ENCODE measurements at regions of chr3 and their contacts with region 1.

Region 1: DNA sequence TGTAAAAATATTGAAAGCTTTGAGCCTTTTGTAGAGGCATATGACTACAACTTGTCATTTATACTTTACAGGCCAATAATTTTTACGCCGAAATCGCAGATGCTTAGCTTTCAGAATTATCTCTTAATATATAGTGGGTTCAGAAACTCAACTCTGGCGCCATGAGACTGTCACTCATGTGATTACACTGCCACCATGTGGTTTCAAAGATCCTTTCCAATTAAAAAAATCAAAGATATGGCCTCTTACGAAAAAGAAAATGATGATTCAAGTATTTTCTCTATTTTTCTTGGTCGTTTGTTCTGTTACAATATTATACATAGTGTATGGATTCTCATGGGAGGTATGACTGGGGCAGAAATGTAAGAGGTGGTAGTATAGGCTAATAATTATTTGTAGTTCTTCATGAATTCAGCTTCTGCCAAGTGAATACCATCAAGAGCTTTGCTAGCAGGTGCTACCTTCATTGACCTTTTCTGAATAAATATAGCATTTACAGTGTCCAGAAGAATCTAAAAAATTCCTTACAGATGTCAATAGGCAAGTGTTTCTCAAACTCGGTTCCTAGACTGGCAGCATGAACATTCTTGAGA is 751.7 kb upstream of the GOLIM4 start:
- DNase-seq: no peak
- H3K4me3 ChIP-seq: no peak overlapping the region
- H3K27ac ChIP-seq: no peak overlapping the region
- H3K4me1 ChIP-seq: no peaks in the 10 kb centered on the region
- H3K27me3 ChIP-seq: peaks cover 0 to 4% (median 0%) of the 10 kb centered on the region in 3 donors
- CTCF ChIP-seq: peak; percentile 28 to 53 (median 44)
- EP300 ChIP-seq: no peak
- POLR2A ChIP-seq: no peak

Region 2: GRCh38 chr3:168213920-168214319 is 633.5 kb before region 1 on chr3:
- intact Hi-C with region 1: loop called (anchors 2 kb)
- DNase-seq: no peak
- H3K4me3 ChIP-seq: no peak overlapping the region
- H3K27ac ChIP-seq: no peak overlapping the region
- H3K4me1 ChIP-seq: no peaks in the 10 kb centered on the region
- H3K27me3 ChIP-seq: no peaks in the 10 kb centered on the region
- CTCF ChIP-seq: no peak
- EP300 ChIP-seq: no peak
- POLR2A ChIP-seq: no peak

Region 3: DNA sequence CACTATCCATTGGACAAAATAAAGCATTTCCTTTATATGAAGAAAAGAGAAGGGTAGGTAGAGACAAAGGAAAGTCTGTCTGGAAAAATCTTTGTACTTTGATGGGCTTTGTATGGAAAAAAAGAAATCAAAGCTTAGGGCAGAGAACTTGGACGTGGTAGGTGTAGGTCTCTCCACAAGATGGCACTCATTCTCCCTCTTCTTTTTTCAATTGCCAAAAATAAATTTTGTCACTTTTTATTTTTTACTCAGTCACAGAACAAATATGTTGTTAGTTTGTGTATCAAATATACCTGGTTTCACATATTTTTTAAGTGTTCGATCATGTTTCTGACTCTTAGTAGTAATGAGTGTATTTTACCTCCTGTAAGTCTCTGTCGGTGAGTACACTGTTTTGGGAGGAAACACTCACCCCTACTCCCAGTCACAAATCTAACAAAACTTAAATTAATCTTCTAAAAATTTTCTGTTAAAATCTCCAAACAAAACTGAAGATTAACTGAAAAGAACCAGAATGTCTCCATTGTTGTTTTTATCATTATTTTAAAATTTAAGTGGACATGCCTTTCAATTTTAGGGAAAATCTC is 335.9 kb before region 1 on chr3:
- intact Hi-C with region 1: loop called (anchors 5 kb)
- DNase-seq: no peak
- H3K4me3 ChIP-seq: no peak overlapping the region
- H3K27ac ChIP-seq: no peak overlapping the region
- H3K4me1 ChIP-seq: no peaks in the 10 kb centered on the region
- H3K27me3 ChIP-seq: no peaks in the 10 kb centered on the region
- CTCF ChIP-seq: peak in 2 of 4 experiments; percentile 6 to 29
- EP300 ChIP-seq: no peak
- POLR2A ChIP-seq: no peak

Region 4: GRCh38 chr3:168671082-168671481 is 176.3 kb before region 1 on chr3:
- intact Hi-C with region 1: no loop called
- DNase-seq: no peak
- H3K4me3 ChIP-seq: no peak overlapping the region
- H3K27ac ChIP-seq: no peak overlapping the region
- H3K4me1 ChIP-seq: no peaks in the 10 kb centered on the region
- H3K27me3 ChIP-seq: no peaks in the 10 kb centered on the region
- CTCF ChIP-seq: no peak
- EP300 ChIP-seq: no peak
- POLR2A ChIP-seq: no peak

Region 5: DNA sequence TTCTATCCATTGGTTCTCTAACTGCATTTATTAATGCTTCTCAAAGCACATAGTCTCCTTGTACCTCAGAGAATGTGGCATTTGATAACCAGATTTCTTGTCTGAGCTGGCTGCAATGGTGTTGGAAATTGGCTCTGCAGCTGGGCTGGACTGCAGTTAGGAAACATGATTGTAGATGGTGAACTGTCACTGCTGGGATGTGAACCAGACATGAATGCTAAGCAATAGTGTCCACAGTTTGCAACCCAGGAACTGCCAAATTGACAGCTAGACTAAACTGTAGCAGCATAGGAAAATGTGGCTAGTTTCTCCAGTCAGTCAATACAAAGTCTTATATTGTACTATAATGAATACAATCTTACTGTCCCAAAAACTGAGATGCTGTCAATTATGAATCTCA is 95.0 kb before region 1 on chr3:
- intact Hi-C with region 1: no loop called
- DNase-seq: no peak
- H3K4me3 ChIP-seq: no peak overlapping the region
- H3K27ac ChIP-seq: no peak overlapping the region
- H3K4me1 ChIP-seq: no peaks in the 10 kb centered on the region
- H3K27me3 ChIP-seq: no peaks in the 10 kb centered on the region
- CTCF ChIP-seq: no peak
- EP300 ChIP-seq: no peak
- POLR2A ChIP-seq: no peak

Region 6: DNA sequence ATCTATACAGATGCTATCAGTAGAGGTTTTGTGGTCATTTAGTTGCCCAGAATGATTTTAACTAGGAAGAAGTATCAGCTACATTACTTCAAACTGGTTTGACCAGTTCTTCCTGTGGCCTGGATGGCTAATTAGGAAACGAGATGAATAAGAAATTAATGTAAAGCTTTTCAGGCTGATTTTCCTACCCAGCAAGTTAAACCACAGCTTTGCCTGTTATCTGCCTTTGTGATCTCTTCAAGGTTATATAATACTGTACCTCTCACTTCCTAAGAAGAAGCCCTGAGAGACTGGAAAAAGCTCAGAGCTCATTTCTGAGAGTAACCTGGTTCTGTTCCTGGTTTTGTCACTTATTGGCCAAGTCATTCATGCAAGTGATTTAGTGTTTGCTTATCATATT is 30.5 kb after region 1 on chr3:
- intact Hi-C with region 1: no loop called
- DNase-seq: no peak
- H3K4me3 ChIP-seq: no peak overlapping the region
- H3K27ac ChIP-seq: no peak overlapping the region
- H3K4me1 ChIP-seq: peaks cover 0 to 9% (median 3%) of the 10 kb centered on the region in 4 donors
- H3K27me3 ChIP-seq: no peaks in the 10 kb centered on the region
- CTCF ChIP-seq: no peak
- EP300 ChIP-seq: no peak
- POLR2A ChIP-seq: no peak

Region 7: GRCh38 chr3:168996622-168997021 is 149.2 kb after region 1 on chr3:
- intact Hi-C with region 1: no loop called
- DNase-seq: no peak
- H3K4me3 ChIP-seq: no peak overlapping the region
- H3K27ac ChIP-seq: no peak overlapping the region
- H3K4me1 ChIP-seq: peaks cover 0 to 9% (median 4%) of the 10 kb centered on the region in 4 donors
- H3K27me3 ChIP-seq: no peaks in the 10 kb centered on the region
- CTCF ChIP-seq: no peak
- EP300 ChIP-seq: no peak
- POLR2A ChIP-seq: no peak

Measured in sigmoid colon (tissue), 7 donors.